ENCODE measurements at regions of chr16 and their contacts with region 1.

Region 1: GRCh38 chr16:69396187-69397061 is 10.6 kb upstream of the TERF2 start:
- DNase-seq: peak; percentile 69
- H3K4me3 Mint-ChIP-seq: no peak overlapping the region
- H3K27ac Mint-ChIP-seq: peak overlapping the region; percentile 7
- H3K4me1 Mint-ChIP-seq: peaks cover 14% of the 10 kb centered on the region
- H3K27me3 Mint-ChIP-seq: peaks cover 15% of the 10 kb centered on the region

Region 2: DNA sequence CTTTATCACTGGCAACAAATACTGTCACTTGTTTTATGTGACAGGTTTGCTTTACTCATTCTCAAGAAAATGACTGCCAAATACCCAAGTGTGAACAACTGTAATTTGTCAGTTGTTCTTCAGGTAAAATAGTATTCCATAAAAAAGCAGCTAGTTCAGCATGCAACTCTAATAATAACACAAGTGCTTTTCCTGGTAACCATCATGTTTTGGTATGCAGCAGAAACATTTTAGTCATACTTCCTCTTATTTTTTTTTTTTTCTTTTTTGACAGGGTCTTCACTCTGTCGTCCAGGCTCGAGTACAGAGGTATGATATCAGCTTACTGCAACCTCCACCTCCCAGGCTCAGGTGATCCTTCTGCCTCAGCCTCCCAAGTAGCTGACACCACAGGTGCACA is 15.2 kb before region 1 on chr16:
- CTCF ChIA-PET with region 1: interaction called, 39 read pairs
- POLR2A ChIA-PET with region 1: interaction called, 6 read pairs
- DNase-seq: no peak
- H3K4me3 Mint-ChIP-seq: no peak overlapping the region
- H3K27ac Mint-ChIP-seq: no peak overlapping the region
- H3K4me1 Mint-ChIP-seq: peaks cover 39% of the 10 kb centered on the region
- H3K27me3 Mint-ChIP-seq: no peaks in the 10 kb centered on the region

Region 3: DNA sequence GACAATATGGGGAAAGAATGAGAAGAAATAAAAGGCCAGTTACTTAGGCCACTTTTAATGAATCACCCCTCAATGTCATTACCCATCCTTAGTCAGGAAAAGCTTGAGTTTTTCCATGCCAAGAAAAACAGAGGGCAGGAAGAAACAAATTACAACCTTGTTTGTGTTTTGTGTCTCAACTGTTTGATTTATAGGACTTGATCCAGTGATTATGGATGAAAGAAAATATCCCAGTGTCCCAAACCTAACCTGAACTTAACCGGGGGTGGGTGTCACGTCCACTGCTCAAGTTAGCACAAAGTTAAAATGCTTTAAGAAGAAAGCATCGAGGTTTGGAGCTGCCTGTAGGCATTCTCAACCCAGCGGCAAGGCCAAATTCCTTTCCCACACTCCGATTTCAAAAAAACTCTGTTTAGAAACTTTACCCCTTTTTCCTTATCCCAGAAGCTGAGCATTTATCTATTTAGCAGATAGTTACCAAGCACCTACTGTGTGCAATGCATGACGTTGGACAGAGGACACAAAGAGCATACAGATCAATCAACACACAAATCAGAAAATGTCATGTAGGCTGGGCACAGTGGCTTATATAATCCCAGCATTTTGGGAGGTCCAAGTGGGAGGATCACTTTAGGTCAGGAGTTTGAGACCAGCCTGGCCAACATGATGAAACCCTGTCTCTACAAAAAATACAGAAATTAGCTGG is 14.0 kb after region 1 on chr16:
- CTCF ChIA-PET with region 1: interaction called, 15 read pairs
- POLR2A ChIA-PET with region 1: no interaction called
- DNase-seq: no peak
- H3K4me3 Mint-ChIP-seq: no peak overlapping the region
- H3K27ac Mint-ChIP-seq: peak overlapping the region; percentile 12
- H3K4me1 Mint-ChIP-seq: peaks cover 12% of the 10 kb centered on the region
- H3K27me3 Mint-ChIP-seq: peaks cover 2% of the 10 kb centered on the region

Region 4: DNA sequence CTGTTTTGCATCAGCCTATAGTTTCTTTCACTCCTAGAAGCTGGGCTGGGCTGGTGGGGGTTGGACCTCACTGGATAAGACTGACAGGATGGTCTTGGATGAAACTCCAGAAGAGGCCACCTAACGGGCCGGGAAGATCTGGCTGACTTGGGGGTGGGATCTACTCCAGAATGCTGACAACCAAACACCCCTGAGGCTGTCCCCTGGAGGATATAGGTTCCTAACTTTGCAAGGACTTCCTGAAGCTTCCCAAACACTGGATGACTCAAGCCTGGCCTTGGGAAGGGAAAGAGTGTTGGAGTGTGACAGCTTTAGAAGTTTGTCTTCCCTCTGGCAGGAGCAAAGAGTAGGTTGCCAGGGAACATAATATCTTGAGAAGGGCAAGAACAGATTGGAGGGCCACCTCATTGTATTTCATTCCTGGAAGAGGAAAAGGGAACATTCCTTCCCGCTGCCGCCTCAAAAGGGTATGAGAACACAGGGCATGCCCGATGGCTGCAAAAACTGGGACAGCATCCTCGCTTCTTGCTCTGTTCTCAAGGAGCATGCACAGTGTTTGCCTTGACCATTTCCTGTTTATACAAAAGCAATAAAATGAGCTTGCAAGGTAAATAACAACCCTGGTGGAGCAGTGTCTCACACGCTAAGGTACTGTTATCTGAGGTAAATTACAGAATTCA is 21.2 kb after region 1 on chr16:
- CTCF ChIA-PET with region 1: interaction called, 12 read pairs
- POLR2A ChIA-PET with region 1: no interaction called
- DNase-seq: no peak
- H3K4me3 Mint-ChIP-seq: no peak overlapping the region
- H3K27ac Mint-ChIP-seq: no peak overlapping the region
- H3K4me1 Mint-ChIP-seq: peaks cover under 1% of the 10 kb centered on the region
- H3K27me3 Mint-ChIP-seq: no peaks in the 10 kb centered on the region

Region 5: GRCh38 chr16:69709456-69710084 is 313.1 kb after region 1 on chr16:
- CTCF ChIA-PET with region 1: interaction called, 12 read pairs
- POLR2A ChIA-PET with region 1: no interaction called
- DNase-seq: no peak
- H3K4me3 Mint-ChIP-seq: no peak overlapping the region
- H3K27ac Mint-ChIP-seq: no peak overlapping the region
- H3K4me1 Mint-ChIP-seq: peaks cover 3% of the 10 kb centered on the region
- H3K27me3 Mint-ChIP-seq: no peaks in the 10 kb centered on the region